Naive thymus-derived CD4-positive, alpha-beta T cell (primary cell): ENCODE measurements at regions of chr16 and their contacts with region 1.

Region 1: GRCh38 chr16:56519459-56520250 is at the start of gene BBS2:
- DNase-seq: peak; percentile 84 to 93 (median 92)
- ATAC-seq: peak; percentile 89
- H3K4me3 ChIP-seq: peak within 1 kb of the TSS; percentile 99
- H3K4me3 Mint-ChIP-seq: peak within 1 kb of the TSS; percentile 82 to 91 (median 86)
- H3K27ac ChIP-seq: peak within 1 kb of the TSS; percentile 92
- H3K27ac Mint-ChIP-seq: peak within 1 kb of the TSS; percentile 60 to 95 (median 90)
- H3K4me1 ChIP-seq: peaks cover 8 to 26% of the 10 kb centered on the region in 2 donors
- H3K4me1 Mint-ChIP-seq: peaks cover 11 to 62% (median 52%) of the 10 kb centered on the region in 7 donors
- H3K27me3 ChIP-seq: no peaks in the 10 kb centered on the region
- H3K27me3 Mint-ChIP-seq: no peaks in the 10 kb centered on the region
- total RNA-seq, gene BBS2: 14.7 to 130 (median 84.0) TPM

Region 2: DNA sequence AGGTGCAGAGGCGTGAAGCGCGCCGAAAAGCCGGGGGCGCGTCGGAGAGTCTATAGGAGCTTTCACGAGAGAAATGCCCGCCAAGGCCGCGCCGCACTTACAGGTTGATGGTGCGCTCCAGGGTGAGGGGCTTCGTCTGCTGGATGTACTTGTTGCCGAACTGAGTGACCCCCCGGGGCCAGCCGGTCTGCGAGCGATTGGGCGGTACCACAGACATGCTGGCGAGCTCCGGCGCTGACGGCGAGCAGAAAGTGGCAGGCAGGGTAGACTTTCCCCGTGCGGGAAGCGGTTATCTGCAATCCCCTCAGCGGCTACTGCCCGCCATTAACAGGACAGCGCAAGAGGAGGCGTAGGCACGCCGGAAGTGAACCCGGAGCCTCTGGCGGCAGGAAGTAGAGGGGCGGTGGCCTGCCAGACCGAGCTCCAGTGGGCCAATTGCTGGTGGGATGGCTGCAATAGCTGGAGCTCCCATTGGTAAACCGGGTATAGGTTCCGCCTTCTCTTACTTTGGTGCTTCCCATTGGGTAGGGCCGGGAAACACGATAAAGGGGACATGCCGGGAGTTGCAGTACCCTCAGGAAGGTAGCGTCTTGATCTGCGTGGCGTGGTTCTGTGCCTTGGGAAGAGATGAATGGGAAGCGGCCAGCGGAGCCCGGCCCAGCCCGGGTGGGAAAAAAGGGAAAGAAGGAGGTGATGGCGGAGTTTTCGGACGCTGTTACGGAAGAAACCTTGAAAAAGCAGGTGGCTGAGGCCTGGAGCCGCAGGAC is 68.5 kb before region 1 on chr16 and contains the starts of genes NUDT21 and OGFOD1:
- CTCF ChIA-PET with region 1: no interaction called
- POLR2A ChIA-PET with region 1: interaction called, 5 read pairs
- intact Hi-C with region 1: loop called (anchors 1 kb)
- DNase-seq: peak; percentile 67 to 96 (median 93)
- ATAC-seq: peak; percentile 99
- H3K4me3 ChIP-seq: peak within 1 kb of the TSS; percentile 96
- H3K4me3 Mint-ChIP-seq: peak within 1 kb of the TSS; percentile 94 to 100 (median 97)
- H3K27ac ChIP-seq: peak within 1 kb of the TSS; percentile 92
- H3K27ac Mint-ChIP-seq: peak within 1 kb of the TSS; percentile 92 to 98 (median 93)
- H3K4me1 ChIP-seq: peaks cover 24 to 42% of the 10 kb centered on the region in 2 donors
- H3K4me1 Mint-ChIP-seq: peaks cover 50 to 77% (median 64%) of the 10 kb centered on the region in 7 donors
- H3K27me3 ChIP-seq: no peaks in the 10 kb centered on the region
- H3K27me3 Mint-ChIP-seq: no peaks in the 10 kb centered on the region
- total RNA-seq, gene NUDT21: 74.0 to 191 (median 97.5) TPM
- total RNA-seq, gene OGFOD1: 23.8 to 51.8 (median 42.1) TPM

Region 3: DNA sequence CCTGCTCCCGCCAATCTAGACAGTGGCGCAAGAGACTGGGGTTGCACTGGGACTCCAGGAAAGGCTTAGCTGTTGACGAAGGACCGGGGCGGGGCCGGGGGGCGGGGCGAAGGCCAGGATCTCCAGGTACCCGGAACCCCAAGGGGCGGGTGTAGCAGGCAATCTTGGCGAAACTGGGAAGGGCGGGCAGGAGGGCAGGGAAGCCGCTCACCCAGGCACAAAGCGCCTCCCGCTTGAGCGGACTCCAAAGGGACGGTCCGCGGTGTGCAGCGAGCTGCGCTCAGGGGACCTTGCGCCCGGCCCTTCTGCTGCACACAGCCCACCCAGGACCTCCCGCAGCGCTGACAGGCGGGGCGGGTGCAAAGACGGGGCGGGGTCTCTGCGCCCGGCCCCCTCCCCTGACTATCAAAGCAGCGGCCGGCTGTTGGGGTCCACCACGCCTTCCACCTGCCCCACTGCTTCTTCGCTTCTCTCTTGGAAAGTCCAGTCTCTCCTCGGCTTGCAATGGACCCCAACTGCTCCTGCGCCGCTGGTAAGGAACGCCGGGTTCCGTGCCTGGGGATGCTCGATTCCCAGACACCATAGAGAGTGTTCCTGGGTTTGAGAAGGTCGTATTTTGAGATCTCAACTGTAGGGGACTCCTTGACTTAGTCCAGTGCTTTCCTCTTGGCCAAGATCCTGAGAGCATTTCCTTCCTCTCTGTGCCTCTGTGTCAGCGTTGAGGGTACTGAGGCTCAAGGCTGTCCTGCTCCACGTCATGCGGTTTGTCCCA is 138.1 kb after region 1 on chr16 and contains the start of gene MT1F:
- CTCF ChIA-PET with region 1: no interaction called
- POLR2A ChIA-PET with region 1: interaction called, 3 read pairs
- intact Hi-C with region 1: loop called in 1 of 2 experiments (anchors 5 kb)
- DNase-seq: peak in 8 of 9 donors; percentile 35 to 66 (median 56)
- ATAC-seq: peak; percentile 80
- H3K4me3 ChIP-seq: peak within 1 kb of the TSS; percentile 91
- H3K4me3 Mint-ChIP-seq: peak within 1 kb of the TSS; percentile 79 to 99 (median 94)
- H3K27ac ChIP-seq: peak within 1 kb of the TSS; percentile 64
- H3K27ac Mint-ChIP-seq: peak within 1 kb of the TSS; percentile 67 to 97 (median 94)
- H3K4me1 ChIP-seq: peaks cover 7 to 12% of the 10 kb centered on the region in 2 donors
- H3K4me1 Mint-ChIP-seq: peaks cover 14 to 46% (median 27%) of the 10 kb centered on the region in 7 donors
- H3K27me3 ChIP-seq: no peaks in the 10 kb centered on the region
- H3K27me3 Mint-ChIP-seq: peaks cover 0 to 21% (median 0%) of the 10 kb centered on the region in 5 donors
- total RNA-seq, gene MT1F: 5.6 to 20.6 (median 8.7) TPM